ENCODE measurements at regions of chr12 and their contacts with region 1.

Region 1: GRCh38 chr12:97637770-97638169 is 175.2 kb downstream of the RMST start:
- DNase-seq: no peak
- H3K4me3 ChIP-seq: no peak overlapping the region
- H3K27ac ChIP-seq: no peak overlapping the region
- H3K4me1 ChIP-seq: no peaks in the 10 kb centered on the region
- H3K27me3 ChIP-seq: no peaks in the 10 kb centered on the region
- CTCF ChIP-seq: no peak
- POLR2A ChIP-seq: no peak

Region 2: GRCh38 chr12:97567619-97568172 is 70.1 kb before region 1 on chr12:
- intact Hi-C with region 1: loop called (anchors 2 kb)
- DNase-seq: no peak
- H3K4me3 ChIP-seq: no peak overlapping the region
- H3K27ac ChIP-seq: peak overlapping the region; percentile 16 to 69
- H3K4me1 ChIP-seq: no peaks in the 10 kb centered on the region
- H3K27me3 ChIP-seq: no peaks in the 10 kb centered on the region
- CTCF ChIP-seq: no peak
- POLR2A ChIP-seq: no peak

Measured in breast epithelium (tissue), 4 donors.